ENCODE measurements at regions of chr10 and their contacts with region 1.

Region 1: GRCh38 chr10:91632671-91633550 is at the start of gene PPP1R3C:
- DNase-seq: peak; percentile 65
- ATAC-seq: peak; percentile 88
- H3K4me3 Mint-ChIP-seq: peak within 1 kb of the TSS; percentile 56
- H3K27ac Mint-ChIP-seq: no peak within 1 kb of the TSS
- H3K4me1 Mint-ChIP-seq: peaks cover 8% of the 10 kb centered on the region
- H3K27me3 Mint-ChIP-seq: peaks cover 67% of the 10 kb centered on the region
- total RNA-seq, gene PPP1R3C: not detected

Region 2: DNA sequence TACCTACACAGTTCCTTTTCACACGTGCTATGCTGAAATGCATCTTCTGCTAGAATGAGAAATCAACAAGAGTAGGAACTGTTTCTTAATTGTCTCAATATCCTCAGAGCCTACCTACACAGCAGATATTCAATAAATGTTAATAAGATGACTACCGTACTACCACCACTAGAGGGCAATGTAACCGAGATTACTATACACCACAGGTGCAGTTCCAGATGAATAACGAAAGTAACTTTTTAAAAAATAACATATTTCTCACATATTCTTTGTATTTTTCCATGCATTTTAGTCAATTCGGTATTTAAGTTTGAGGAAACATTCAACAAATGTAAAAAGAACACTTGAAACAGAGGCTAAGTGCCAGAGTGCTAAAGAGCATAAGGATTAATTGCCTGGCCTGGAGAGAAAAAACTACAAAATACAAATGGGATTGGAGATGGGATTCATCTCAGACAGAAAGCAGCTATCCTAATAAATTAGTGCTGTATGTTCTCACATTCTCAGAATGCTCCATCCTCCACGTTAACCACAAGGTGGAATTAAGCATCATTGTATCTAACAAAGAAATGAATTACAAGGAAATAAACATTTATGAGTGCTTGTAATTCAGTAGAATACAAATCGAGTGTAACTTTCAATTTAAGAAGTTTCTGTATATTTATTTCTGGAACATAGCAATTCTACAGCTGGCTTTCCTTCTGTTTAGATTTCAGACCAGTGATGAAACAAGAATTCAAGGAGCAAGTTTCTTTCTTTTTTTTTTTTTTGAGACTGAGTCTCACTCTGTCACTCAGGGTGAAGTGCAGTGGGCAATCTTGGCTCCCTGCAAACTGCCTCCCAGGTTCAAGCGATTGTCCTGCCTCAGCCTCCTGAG is 243.0 kb before region 1 on chr10:
- CTCF ChIA-PET with region 1: interaction called, 21 read pairs
- DNase-seq: no peak
- ATAC-seq: peak; percentile 94
- H3K4me3 Mint-ChIP-seq: no peak overlapping the region
- H3K27ac Mint-ChIP-seq: peak overlapping the region; percentile 52
- H3K4me1 Mint-ChIP-seq: peaks cover 3% of the 10 kb centered on the region
- H3K27me3 Mint-ChIP-seq: peaks cover 22% of the 10 kb centered on the region

Region 3: GRCh38 chr10:91621483-91622113 is 11.3 kb before region 1 on chr10:
- CTCF ChIA-PET with region 1: interaction called, 13 read pairs
- DNase-seq: no peak
- ATAC-seq: no peak
- H3K4me3 Mint-ChIP-seq: no peak overlapping the region
- H3K27ac Mint-ChIP-seq: no peak overlapping the region
- H3K4me1 Mint-ChIP-seq: no peaks in the 10 kb centered on the region
- H3K27me3 Mint-ChIP-seq: peaks cover 37% of the 10 kb centered on the region

Region 4: GRCh38 chr10:91843083-91843482 is 210.2 kb after region 1 on chr10:
- CTCF ChIA-PET with region 1: no interaction called
- DNase-seq: no peak
- ATAC-seq: no peak
- H3K4me3 Mint-ChIP-seq: no peak overlapping the region
- H3K27ac Mint-ChIP-seq: no peak overlapping the region
- H3K4me1 Mint-ChIP-seq: no peaks in the 10 kb centered on the region
- H3K27me3 Mint-ChIP-seq: no peaks in the 10 kb centered on the region

Measured in activated CD8-positive, alpha-beta memory T cell treated with anti-CD3 and anti-CD28 coated beads, Interleukin-2, amount 10 ng/mL, durations not matched to agents 7 days and 5 days (primary cell).